ENCODE measurements at regions of chr13 and their contacts with region 1.

Region 1: DNA sequence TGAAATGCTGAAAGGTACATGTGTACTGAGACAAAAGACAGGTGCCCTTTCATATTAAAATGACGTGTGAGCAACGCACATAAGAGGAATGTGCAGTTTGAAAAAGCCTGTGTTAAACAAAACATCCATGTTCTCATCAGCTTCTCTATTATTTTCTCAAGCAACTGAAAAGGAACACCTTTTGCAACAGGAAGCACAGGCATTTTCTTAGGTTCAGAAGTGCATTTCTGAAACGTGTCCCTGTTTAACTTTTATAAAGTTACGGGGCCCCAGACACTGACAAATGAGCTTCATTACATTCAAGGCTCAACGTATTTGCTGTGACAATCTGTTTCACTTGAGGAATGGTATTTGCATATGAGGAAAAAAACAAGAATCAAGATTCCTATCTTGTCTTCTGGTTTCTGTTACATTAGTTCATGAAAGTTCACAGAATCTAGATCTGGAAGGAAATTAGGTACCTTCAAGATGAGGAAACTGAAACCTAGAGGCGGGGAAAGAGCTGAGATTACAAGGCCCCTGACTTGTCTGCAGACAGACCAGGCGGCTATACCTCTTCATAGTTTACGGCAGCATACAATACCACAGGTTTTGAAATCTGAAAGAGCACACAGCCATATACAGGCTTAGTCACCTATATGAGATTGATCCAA is 431.7 kb downstream of the KLF12 start:
- DNase-seq: peak; percentile 84
- H3K4me3 Mint-ChIP-seq: peak overlapping the region; percentile 63
- H3K27ac Mint-ChIP-seq: peak overlapping the region; percentile 94
- H3K4me1 Mint-ChIP-seq: peaks cover 33% of the 10 kb centered on the region
- H3K27me3 Mint-ChIP-seq: no peaks in the 10 kb centered on the region
- CTCF ChIP-seq: no peak

Region 2: GRCh38 chr13:73228546-73228945 is 474.0 kb before region 1 on chr13:
- CTCF ChIA-PET with region 1: interaction called, 3 read pairs
- POLR2A ChIA-PET with region 1: no interaction called
- intact Hi-C with region 1: loop called (anchors 5 kb)
- DNase-seq: peak; percentile 32
- H3K4me3 Mint-ChIP-seq: no peak overlapping the region
- H3K27ac Mint-ChIP-seq: no peak overlapping the region
- H3K4me1 Mint-ChIP-seq: peaks cover 19% of the 10 kb centered on the region
- H3K27me3 Mint-ChIP-seq: no peaks in the 10 kb centered on the region
- CTCF ChIP-seq: peak; percentile 12

Region 3: GRCh38 chr13:73440296-73440895 is 262.1 kb before region 1 on chr13:
- CTCF ChIA-PET with region 1: no interaction called
- POLR2A ChIA-PET with region 1: no interaction called
- intact Hi-C with region 1: no loop called
- DNase-seq: no peak
- H3K4me3 Mint-ChIP-seq: no peak overlapping the region
- H3K27ac Mint-ChIP-seq: no peak overlapping the region
- H3K4me1 Mint-ChIP-seq: no peaks in the 10 kb centered on the region
- H3K27me3 Mint-ChIP-seq: no peaks in the 10 kb centered on the region
- CTCF ChIP-seq: no peak

Region 4: GRCh38 chr13:73677048-73677601 is 25.4 kb before region 1 on chr13:
- CTCF ChIA-PET with region 1: no interaction called
- POLR2A ChIA-PET with region 1: interaction called, 12 read pairs
- intact Hi-C with region 1: no loop called
- DNase-seq: peak; percentile 78
- H3K4me3 Mint-ChIP-seq: peak overlapping the region; percentile 36
- H3K27ac Mint-ChIP-seq: peak overlapping the region; percentile 97
- H3K4me1 Mint-ChIP-seq: peaks cover 19% of the 10 kb centered on the region
- H3K27me3 Mint-ChIP-seq: no peaks in the 10 kb centered on the region
- CTCF ChIP-seq: no peak

Region 5: GRCh38 chr13:74133657-74134201 is 431.2 kb after region 1 on chr13:
- CTCF ChIA-PET with region 1: no interaction called
- POLR2A ChIA-PET with region 1: no interaction called
- intact Hi-C with region 1: no loop called
- DNase-seq: peak; percentile 73
- H3K4me3 Mint-ChIP-seq: no peak overlapping the region
- H3K27ac Mint-ChIP-seq: peak overlapping the region; percentile 91
- H3K4me1 Mint-ChIP-seq: peaks cover 18% of the 10 kb centered on the region
- H3K27me3 Mint-ChIP-seq: no peaks in the 10 kb centered on the region
- CTCF ChIP-seq: no peak